Thyroid gland (tissue), 4 donors: ENCODE measurements at regions of chr19 and their contacts with region 1.

Region 1: DNA sequence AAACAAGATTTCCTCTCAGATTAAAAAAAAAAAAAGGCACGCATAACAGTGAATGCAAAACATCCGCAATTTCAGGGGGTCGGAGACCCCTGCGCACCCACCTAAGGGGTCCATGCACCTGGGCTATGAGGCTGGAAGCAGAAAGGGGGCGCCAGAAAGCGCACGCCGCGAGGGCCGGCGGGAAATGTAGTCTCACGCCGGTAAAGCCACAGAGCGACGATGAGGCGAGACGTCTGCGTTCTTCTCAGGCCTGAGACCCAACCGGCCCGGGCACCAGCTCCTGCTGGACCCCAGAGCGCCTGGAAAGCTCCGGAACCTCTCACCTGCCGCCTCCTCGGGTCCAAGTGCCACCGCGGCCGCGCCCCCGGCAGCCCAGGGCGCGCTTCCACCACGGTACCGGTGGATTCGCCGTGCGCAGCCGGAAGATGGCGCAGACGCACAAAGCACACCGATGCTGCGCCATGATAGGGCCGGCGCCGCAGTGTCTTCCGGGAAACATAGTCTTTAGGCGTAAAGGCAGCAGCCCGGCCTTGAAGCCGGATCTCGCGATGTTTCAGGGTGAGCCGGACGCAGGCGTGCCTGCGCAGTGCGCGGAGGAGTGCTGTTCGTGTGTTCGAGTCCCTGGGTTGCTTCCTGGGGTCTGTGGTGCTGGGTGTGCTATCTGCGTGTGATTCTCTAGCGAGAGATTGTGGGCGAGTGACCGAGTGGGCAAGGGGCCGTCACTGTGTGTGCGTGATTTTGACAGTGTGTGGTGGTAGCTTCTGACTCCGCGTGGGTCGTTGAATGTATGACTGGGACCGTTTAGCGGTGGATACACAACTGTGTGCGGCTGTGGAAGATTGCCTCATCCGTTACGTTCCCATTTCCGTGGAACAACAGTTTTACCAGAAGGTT is at the start of gene ZNF582:
- DNase-seq: peak; percentile 97 to 98
- H3K4me3 ChIP-seq: peak within 1 kb of the TSS; percentile 30 to 72 (median 56)
- H3K27ac ChIP-seq: peak within 1 kb of the TSS; percentile 93 to 97 (median 94)
- H3K4me1 ChIP-seq: peaks cover 4 to 8% of the 10 kb centered on the region in 2 donors
- H3K27me3 ChIP-seq: no peaks in the 10 kb centered on the region
- CTCF ChIP-seq: peak; percentile 45 to 84 (median 70)
- POLR2A ChIP-seq: peak; percentile 17 to 59
- total RNA-seq, gene ZNF582: 4.9 to 19.6 (median 10.9) TPM

Region 2: DNA sequence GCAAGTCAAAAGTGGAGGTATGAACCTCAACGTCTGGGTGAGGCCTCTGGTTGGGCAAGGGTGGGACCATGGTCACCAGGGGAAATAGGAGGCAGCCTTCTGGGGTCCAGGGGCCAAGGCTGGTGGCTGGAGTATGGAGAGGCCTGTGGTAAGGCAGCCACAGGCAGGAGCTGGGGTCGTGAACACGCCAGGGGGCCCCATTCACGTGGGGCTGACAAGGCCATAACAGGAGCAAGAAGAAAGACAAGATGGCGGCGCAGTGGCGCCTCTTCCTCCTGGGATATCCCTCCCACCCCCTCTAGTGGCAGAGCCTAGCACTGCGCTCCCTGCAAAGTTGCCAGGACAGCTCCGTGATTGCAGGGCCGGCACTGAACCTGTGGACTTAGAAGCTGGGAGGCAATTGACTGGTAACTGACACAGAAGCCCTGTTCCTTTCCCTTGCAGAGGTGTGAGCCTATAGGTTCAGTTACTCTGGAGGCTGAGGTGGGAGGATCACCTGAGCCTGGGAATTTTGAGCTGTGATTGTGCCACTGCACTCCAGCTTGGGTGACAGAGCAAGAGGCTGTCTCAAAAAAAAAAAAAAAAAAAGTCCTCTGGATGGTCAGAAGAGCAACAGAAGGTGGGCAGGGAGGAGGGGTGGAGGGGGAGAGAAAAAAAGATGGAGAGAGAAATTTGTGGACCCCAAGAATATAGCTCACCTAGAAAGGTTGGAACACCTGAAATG is 140.5 kb before region 1 on chr19:
- intact Hi-C with region 1: no loop called
- DNase-seq: peak; percentile 64 to 74
- H3K4me3 ChIP-seq: no peak overlapping the region
- H3K27ac ChIP-seq: no peak overlapping the region
- H3K4me1 ChIP-seq: no peaks in the 10 kb centered on the region
- H3K27me3 ChIP-seq: no peaks in the 10 kb centered on the region
- CTCF ChIP-seq: peak; percentile 21 to 78 (median 66)
- POLR2A ChIP-seq: no peak

Region 3: GRCh38 chr19:56671613-56671994 is 278.2 kb after region 1 on chr19 and contains the start of gene ZNF835:
- intact Hi-C with region 1: loop called (anchors 10 kb)
- DNase-seq: peak; percentile 93
- H3K4me3 ChIP-seq: peak within 1 kb of the TSS; percentile 30 to 87 (median 66)
- H3K27ac ChIP-seq: no peak within 1 kb of the TSS
- H3K4me1 ChIP-seq: peaks cover 16 to 17% of the 10 kb centered on the region in 2 donors
- H3K27me3 ChIP-seq: no peaks in the 10 kb centered on the region
- CTCF ChIP-seq: peak in 4 of 6 experiments; percentile 11 to 47 (median 24)
- POLR2A ChIP-seq: peak in 1 of 2 donors; percentile 52
- total RNA-seq, gene ZNF835: 6.8 to 12.3 (median 8.7) TPM